Endothelial cell of umbilical vein (primary cell): ENCODE measurements at regions of chr15 and their contacts with region 1.

Region 1: GRCh38 chr15:60444289-60444912 is 34.5 kb downstream of the ICE2 start:
- DNase-seq: peak; percentile 35
- H3K4me3 ChIP-seq: no peak overlapping the region
- H3K27ac ChIP-seq: no peak overlapping the region
- H3K4me1 ChIP-seq: no peaks in the 10 kb centered on the region
- H3K27me3 ChIP-seq: no peaks in the 10 kb centered on the region
- CTCF ChIP-seq: peak; percentile 14 to 23
- POLR2A ChIP-seq: no peak

Region 2: DNA sequence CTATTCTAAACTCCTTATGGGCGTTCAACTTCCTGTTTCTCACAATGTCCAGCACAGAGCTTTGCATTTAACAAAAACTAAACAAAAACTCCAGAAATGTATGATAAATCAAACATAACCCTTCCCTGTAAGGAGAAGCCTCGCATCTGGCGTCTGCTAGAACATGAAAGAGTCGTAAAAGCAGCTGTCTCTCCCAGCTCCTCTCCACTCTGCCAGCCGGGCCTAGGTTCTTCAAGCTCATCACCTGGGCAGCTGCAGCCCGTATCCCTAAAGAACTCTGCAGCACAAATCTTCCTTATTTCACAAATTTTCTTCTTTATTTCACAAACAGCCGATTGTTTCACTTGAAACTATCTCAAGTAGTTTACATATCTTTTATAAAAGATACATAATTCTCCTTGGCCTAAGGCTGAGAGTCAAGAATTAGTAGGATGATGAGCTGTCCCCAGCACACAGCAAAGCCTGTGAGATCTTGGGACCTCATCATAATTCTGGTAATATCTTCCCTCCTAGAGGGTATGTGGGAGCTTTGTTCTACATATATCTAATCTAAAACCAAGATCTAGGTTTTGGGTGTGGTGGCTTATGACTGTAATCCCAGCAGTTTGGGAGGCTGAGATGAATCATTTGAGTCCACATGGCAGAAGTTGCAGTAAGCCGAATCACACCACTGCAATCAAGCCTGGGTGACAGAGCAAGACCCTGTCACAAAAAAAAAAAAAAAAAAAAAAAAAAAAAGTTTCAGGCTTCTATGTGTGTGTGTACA is 81.9 kb before region 1 on chr15:
- CTCF ChIA-PET with region 1: interaction called, 84 read pairs
- POLR2A ChIA-PET with region 1: no interaction called
- dilution Hi-C with region 1: no loop called
- intact Hi-C with region 1: loop called (anchors 1 kb)
- DNase-seq: no peak
- H3K4me3 ChIP-seq: no peak overlapping the region
- H3K27ac ChIP-seq: peak overlapping the region; percentile 23
- H3K4me1 ChIP-seq: peaks cover 46% of the 10 kb centered on the region
- H3K27me3 ChIP-seq: no peaks in the 10 kb centered on the region
- CTCF ChIP-seq: no peak
- POLR2A ChIP-seq: no peak

Region 3: DNA sequence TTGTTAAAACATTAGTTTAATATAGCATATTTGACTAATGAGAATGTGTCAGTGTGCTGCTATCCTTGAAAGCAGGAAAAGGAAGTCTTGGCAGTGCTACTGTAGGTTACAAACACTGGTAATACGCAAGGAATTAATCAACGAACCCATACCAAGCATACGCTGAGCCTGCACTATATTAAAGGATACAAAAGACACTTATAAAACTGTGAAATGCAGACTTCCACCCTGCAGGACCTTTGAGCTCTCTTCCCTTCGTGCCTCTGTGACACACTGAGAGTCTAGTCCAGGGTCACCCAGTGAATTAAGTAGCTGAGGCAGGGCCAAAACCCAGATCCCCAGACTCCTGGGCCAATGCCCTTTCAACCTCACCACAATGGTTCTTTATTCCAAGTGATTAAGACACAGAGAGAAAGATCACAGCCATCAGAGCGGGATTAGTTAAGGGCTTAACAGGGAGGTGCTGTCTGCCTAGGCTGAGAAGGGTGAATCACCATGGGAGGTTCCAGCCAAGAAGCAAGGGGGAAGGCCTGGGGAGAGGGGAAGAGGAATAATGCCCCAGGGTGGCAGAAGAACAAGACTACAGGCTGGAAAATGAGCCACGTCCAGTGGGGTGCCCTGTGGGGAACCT is 53.4 kb before region 1 on chr15:
- CTCF ChIA-PET with region 1: interaction called, 23 read pairs
- POLR2A ChIA-PET with region 1: no interaction called
- dilution Hi-C with region 1: no loop called
- intact Hi-C with region 1: loop called (anchors 1 kb)
- DNase-seq: peak; percentile 87
- H3K4me3 ChIP-seq: peak overlapping the region in 1 of 3 experiments; percentile 96
- H3K27ac ChIP-seq: peak overlapping the region; percentile 97
- H3K4me1 ChIP-seq: peaks cover 88% of the 10 kb centered on the region
- H3K27me3 ChIP-seq: no peaks in the 10 kb centered on the region
- CTCF ChIP-seq: no peak
- POLR2A ChIP-seq: no peak

Region 4: DNA sequence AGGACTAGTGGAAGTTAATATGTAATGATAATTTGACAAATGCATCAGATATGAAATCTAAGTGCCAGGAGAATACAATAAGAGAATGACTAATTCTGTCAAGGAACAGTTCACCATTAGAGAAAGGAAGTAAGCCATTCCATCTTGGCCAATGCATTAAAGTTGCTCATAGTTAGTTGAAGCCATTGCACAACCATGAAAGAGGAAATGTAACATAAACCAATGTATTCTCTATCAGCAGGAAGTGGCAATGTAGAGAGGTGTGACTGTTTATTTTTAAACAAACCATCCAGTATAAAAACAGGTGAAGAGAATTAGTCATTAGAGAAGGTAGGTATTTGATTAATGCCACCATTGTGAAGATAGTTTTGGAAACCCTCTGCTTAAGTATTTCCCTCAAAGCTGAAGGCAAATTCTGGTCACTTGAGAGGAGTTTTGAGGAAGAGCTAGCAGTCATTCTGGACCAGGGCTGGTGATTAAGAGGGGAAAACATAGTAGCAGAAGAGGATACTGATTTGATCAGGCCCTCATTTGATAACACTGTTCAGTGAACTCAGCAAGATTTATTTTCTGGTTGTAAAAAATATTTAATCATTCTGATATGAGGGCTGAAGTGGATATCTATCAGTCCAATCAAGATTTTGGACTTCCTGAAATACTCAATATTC is 35.8 kb before region 1 on chr15:
- CTCF ChIA-PET with region 1: interaction called, 40 read pairs
- POLR2A ChIA-PET with region 1: no interaction called
- dilution Hi-C with region 1: no loop called
- intact Hi-C with region 1: no loop called
- DNase-seq: peak; percentile 78
- H3K4me3 ChIP-seq: no peak overlapping the region
- H3K27ac ChIP-seq: peak overlapping the region; percentile 62
- H3K4me1 ChIP-seq: peaks cover 27% of the 10 kb centered on the region
- H3K27me3 ChIP-seq: no peaks in the 10 kb centered on the region
- CTCF ChIP-seq: no peak
- POLR2A ChIP-seq: no peak

Region 5: DNA sequence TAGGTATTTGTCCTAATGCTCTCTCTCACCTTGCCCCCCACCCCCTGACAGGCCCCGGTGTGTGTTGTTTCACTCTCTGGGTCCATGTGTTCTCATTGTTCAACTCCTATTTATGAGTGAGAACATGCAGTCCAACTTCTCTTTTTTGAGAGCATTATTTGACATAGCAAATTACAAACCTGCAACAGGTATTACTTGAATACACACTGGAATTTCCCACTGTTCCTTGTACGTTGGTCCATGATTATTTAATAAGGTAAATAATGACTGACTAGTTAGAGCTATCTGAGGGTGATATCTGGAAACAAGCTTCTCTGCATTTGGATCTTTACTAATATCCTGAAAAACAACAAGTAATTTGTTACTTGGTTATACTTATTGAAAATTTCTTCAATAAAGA is 10.4 kb after region 1 on chr15:
- CTCF ChIA-PET with region 1: interaction called, 12 read pairs
- POLR2A ChIA-PET with region 1: no interaction called
- dilution Hi-C with region 1: no loop called
- intact Hi-C with region 1: no loop called
- DNase-seq: no peak
- H3K4me3 ChIP-seq: no peak overlapping the region
- H3K27ac ChIP-seq: no peak overlapping the region
- H3K4me1 ChIP-seq: peaks cover 2% of the 10 kb centered on the region
- H3K27me3 ChIP-seq: no peaks in the 10 kb centered on the region
- CTCF ChIP-seq: no peak
- POLR2A ChIP-seq: no peak

Region 6: GRCh38 chr15:61921093-61921492 is 1476.7 kb after region 1 on chr15:
- CTCF ChIA-PET with region 1: no interaction called
- POLR2A ChIA-PET with region 1: interaction called, 10 read pairs
- dilution Hi-C with region 1: no loop called
- intact Hi-C with region 1: no loop called
- DNase-seq: no peak
- H3K4me3 ChIP-seq: no peak overlapping the region
- H3K27ac ChIP-seq: no peak overlapping the region
- H3K4me1 ChIP-seq: peaks cover 3% of the 10 kb centered on the region
- H3K27me3 ChIP-seq: no peaks in the 10 kb centered on the region
- CTCF ChIP-seq: no peak
- POLR2A ChIP-seq: no peak